K562 (cell line): ENCODE measurements at regions of chr5 and their contacts with region 1.

Region 1: GRCh38 chr5:10353241-10354047 is at the start of gene MARCHF6:
- DNase-seq: peak; percentile 91 to 99 (median 92)
- ATAC-seq: peak; percentile 80
- H3K4me3 ChIP-seq: peak within 1 kb of the TSS; percentile 60
- H3K27ac ChIP-seq: peak within 1 kb of the TSS; percentile 96
- H3K4me1 ChIP-seq: peaks cover 22 to 34% of the 10 kb centered on the region in 2 experiments
- H3K27me3 ChIP-seq: no peaks in the 10 kb centered on the region
- CTCF ChIP-seq: peak in 1 of 3 experiments; percentile 7; a peak in 1 of 6 replicates
- EP300 ChIP-seq: peak; percentile 49
- POLR2A ChIP-seq: peak; percentile 98
- RAD21 ChIP-seq: no peak
- polyA plus RNA-seq, gene MARCHF6: 170 to 176 TPM

Region 2: DNA sequence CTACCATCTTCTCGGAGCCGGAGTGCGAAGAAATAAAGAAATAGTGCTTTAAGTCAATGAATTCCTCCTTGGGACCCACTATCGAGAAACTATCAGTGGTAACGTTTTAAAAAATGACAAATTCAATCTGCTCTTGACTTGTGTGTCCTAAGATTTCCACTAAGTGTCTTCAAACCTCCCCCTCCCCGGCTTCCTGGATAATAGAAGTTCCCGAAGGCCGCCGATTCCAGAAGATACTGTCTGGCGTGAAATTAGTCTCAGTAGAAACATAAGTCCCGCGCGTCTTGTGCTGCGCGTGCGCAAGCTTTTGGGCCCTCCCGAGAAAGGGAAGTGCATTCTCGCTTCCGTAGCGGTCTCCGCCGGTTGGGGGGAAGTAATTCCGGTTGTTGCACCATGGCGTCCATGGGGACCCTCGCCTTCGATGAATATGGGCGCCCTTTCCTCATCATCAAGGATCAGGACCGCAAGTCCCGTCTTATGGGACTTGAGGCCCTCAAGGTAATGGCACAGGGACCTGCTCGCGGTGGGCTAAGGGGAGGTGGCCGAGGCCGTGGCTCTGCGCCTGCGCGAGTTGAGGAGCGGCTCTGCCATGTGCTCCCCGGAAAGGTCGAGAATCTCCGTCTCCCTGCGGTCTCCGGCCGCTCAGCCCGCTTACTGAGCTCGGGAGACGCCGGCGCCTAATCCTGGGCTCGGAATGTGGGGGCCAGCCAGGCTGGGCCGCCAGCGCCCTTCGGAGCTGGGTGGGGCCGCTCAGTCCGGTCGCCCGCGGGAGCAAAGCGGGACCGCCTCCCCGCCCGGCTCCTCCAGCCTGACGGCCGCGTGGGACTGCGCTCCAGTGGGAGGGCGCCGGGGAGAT is 103.3 kb before region 1 on chr5 and contains the start of gene CCT5:
- CTCF ChIA-PET with region 1: no interaction called
- POLR2A ChIA-PET with region 1: interaction called, 14 read pairs
- in situ Hi-C with region 1: no loop called
- intact Hi-C with region 1: loop called (anchors 5 kb)
- DNase-seq: peak; percentile 93 to 99 (median 96)
- ATAC-seq: peak; percentile 76
- H3K4me3 ChIP-seq: peak within 1 kb of the TSS; percentile 83
- H3K27ac ChIP-seq: peak within 1 kb of the TSS; percentile 95
- H3K4me1 ChIP-seq: peaks cover 12 to 20% of the 10 kb centered on the region in 2 experiments
- H3K27me3 ChIP-seq: no peaks in the 10 kb centered on the region
- CTCF ChIP-seq: no peak
- EP300 ChIP-seq: peak; percentile 15; the same call in 1 of the 2 replicates
- POLR2A ChIP-seq: peak; percentile 99
- RAD21 ChIP-seq: 0 out of 4 replicates have a peak, but pooled peaks of 1 of the 2 experiments have one; percentile 9
- polyA plus RNA-seq, gene CCT5: 926 to 1,606 TPM

Region 3: GRCh38 chr5:10307206-10308148 is 46.0 kb before region 1 on chr5 and contains the start of gene CMBL:
- CTCF ChIA-PET with region 1: no interaction called
- POLR2A ChIA-PET with region 1: interaction called, 27 read pairs
- in situ Hi-C with region 1: no loop called
- intact Hi-C with region 1: no loop called
- DNase-seq: peak; percentile 90 to 95 (median 92)
- ATAC-seq: peak; percentile 70
- H3K4me3 ChIP-seq: peak within 1 kb of the TSS; percentile 78
- H3K27ac ChIP-seq: peak within 1 kb of the TSS; percentile 91
- H3K4me1 ChIP-seq: peaks cover 48 to 77% of the 10 kb centered on the region in 2 experiments
- H3K27me3 ChIP-seq: no peaks in the 10 kb centered on the region
- CTCF ChIP-seq: 0 out of 6 replicates have a peak, but pooled peaks of 1 of the 3 experiments have one; percentile 1
- EP300 ChIP-seq: peak; percentile 42
- POLR2A ChIP-seq: peak; percentile 86
- RAD21 ChIP-seq: peak in 1 of 2 experiments; percentile 11; a peak in 1 of 4 replicates
- polyA plus RNA-seq, gene CMBL: 53.4 to 71.1 TPM

Region 4: GRCh38 chr5:10329820-10330481 is 23.5 kb before region 1 on chr5:
- CTCF ChIA-PET with region 1: interaction called, 4 read pairs
- POLR2A ChIA-PET with region 1: interaction called, 12 read pairs
- in situ Hi-C with region 1: no loop called
- intact Hi-C with region 1: no loop called
- DNase-seq: no peak
- ATAC-seq: no peak
- H3K4me3 ChIP-seq: no peak overlapping the region
- H3K27ac ChIP-seq: no peak overlapping the region
- H3K4me1 ChIP-seq: peaks cover 8 to 10% of the 10 kb centered on the region in 2 experiments; a peak in 3 of 5 replicates
- H3K27me3 ChIP-seq: no peaks in the 10 kb centered on the region
- CTCF ChIP-seq: no peak
- EP300 ChIP-seq: no peak
- POLR2A ChIP-seq: no peak
- RAD21 ChIP-seq: no peak

Region 5: GRCh38 chr5:10364186-10364683 is 10.8 kb after region 1 on chr5:
- CTCF ChIA-PET with region 1: no interaction called
- POLR2A ChIA-PET with region 1: interaction called, 38 read pairs
- in situ Hi-C with region 1: no loop called
- intact Hi-C with region 1: no loop called
- DNase-seq: peak in 3 of 4 experiments; percentile 39 to 70 (median 60)
- ATAC-seq: peak; percentile 69
- H3K4me3 ChIP-seq: no peak overlapping the region
- H3K27ac ChIP-seq: no peak overlapping the region
- H3K4me1 ChIP-seq: peaks cover 17 to 19% of the 10 kb centered on the region in 2 experiments; a peak in 4 of 5 replicates
- H3K27me3 ChIP-seq: no peaks in the 10 kb centered on the region
- CTCF ChIP-seq: peak; percentile 68 to 84 (median 78)
- EP300 ChIP-seq: no peak
- POLR2A ChIP-seq: no peak
- RAD21 ChIP-seq: peak; percentile 65 to 85

Region 6: GRCh38 chr5:10505517-10506095 is 152.2 kb after region 1 on chr5:
- CTCF ChIA-PET with region 1: no interaction called
- POLR2A ChIA-PET with region 1: no interaction called
- in situ Hi-C with region 1: no loop called
- intact Hi-C with region 1: loop called (anchors 10 kb)
- DNase-seq: peak in 2 of 4 experiments; percentile 39 to 66
- ATAC-seq: peak; percentile 29
- H3K4me3 ChIP-seq: no peak overlapping the region
- H3K27ac ChIP-seq: peak overlapping the region; percentile 6; the same call in 1 of the 3 replicates
- H3K4me1 ChIP-seq: peaks cover 26 to 67% of the 10 kb centered on the region in 2 experiments
- H3K27me3 ChIP-seq: peaks cover 0 to 13% of the 10 kb centered on the region in 2 experiments; a peak in 3 of 5 replicates
- CTCF ChIP-seq: 0 out of 6 replicates have a peak, but pooled peaks of 1 of the 3 experiments have one; percentile 5
- EP300 ChIP-seq: peak; percentile 83
- POLR2A ChIP-seq: no peak
- RAD21 ChIP-seq: no peak